ENCODE measurements at regions of chr20 and their contacts with region 1.

Region 1: DNA sequence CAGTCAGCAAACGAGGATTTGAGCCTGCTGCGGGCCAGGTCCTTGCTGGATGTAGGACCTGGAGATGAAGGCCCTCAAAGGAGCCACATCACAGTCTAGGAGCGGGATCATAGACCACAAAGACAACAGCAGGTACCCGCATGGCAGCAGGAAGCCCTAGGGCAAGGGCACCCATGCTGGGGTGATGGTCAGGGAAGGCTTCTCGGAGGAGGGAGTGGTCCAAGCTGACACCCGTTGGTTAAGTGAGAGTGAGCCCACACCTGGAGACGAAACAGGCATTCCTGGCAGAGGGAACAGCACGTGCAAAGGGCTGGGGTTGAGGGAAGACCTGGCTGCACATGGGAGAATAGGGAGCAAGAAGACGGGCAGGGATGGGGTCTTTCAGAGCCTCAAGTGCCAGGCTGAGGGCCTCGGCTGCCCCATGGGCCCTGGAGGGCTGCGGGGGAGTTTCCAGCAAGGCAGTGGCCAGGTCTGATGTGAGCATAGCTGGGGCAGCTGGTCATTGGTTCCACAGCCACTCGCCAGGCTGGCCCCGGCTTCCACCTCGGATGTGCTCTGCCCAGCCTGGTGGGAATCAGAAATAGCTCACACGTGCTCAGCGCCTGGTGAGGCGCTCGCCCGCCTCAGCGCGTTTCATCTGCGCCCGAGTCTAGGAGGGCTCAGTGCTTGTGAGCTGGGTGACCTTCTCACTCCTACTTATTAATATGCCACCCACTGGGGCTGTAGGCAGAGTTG is 15.0 kb downstream of the DLGAP4 start:
- DNase-seq: no peak
- ATAC-seq: no peak
- H3K4me3 ChIP-seq: no peak overlapping the region
- H3K27ac ChIP-seq: no peak overlapping the region
- H3K4me1 ChIP-seq: no peaks in the 10 kb centered on the region
- H3K27me3 ChIP-seq: peaks cover 0 to 8% (median 0%) of the 10 kb centered on the region in 9 donors
- CTCF ChIP-seq: no peak
- POLR2A ChIP-seq: no peak

Region 2: DNA sequence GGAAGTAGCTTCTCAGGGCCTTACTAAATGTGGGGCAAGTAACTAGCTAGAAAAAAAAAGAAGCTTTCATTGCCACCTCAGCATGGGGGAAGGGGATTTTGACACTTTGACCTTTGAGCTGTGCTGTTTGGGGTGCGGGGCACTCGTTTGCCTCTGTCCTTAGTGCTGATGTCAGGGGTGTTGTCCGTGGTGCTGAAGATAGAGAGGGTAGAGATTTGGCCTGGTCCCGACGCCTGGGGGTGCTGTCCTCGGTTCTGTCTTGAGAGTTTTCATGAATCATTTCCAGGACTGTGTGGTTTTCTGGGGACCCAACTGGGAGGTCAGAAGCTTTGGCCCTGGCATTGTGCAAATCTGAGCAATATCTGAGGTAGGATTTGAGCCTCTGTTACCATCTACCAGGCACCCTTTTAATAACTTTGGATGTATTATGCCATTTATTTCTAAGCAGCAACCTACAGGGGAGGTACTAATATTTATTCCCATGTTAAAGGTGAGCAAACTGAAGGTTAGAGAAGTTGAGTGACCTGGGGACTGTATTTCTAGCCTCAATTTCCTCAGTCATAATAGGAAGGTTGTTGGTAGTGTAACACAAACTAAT is 63.0 kb after region 1 on chr20:
- intact Hi-C with region 1: loop called in 1 of 10 experiments (anchors 10 kb)
- DNase-seq: no peak
- ATAC-seq: peak in 1 of 4 donors; percentile 58
- H3K4me3 ChIP-seq: no peak overlapping the region
- H3K27ac ChIP-seq: no peak overlapping the region
- H3K4me1 ChIP-seq: no peaks in the 10 kb centered on the region
- H3K27me3 ChIP-seq: peaks cover 0 to 3% (median 0%) of the 10 kb centered on the region in 9 donors
- CTCF ChIP-seq: peak in 1 of 12 donors; percentile 13
- POLR2A ChIP-seq: no peak

Measured in heart left ventricle (tissue), 16 donors.